Mammary epithelial cell (primary cell): ENCODE measurements at regions of chr1 and their contacts with region 1.

Region 1: DNA sequence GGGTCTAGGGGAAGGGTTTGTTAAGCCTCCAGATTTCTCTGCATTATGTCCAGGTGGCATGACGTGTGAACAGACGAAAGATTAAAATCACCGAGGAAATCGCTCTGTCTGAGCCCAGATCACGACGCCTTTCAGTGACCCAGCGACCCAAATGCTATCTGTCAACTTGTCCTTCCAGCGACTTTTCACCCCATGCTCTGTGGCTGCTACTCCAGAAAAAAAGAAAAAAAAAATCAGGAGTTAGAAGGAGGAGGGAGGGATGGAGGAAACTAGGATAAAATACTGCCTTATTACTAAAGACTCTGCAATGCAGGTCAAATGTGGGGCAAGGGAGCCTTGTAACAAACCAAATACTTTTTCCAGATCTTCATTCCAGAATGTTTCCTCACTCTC is 352.0 kb downstream of the NUF2 start:
- DNase-seq: no peak
- H3K4me3 ChIP-seq: no peak overlapping the region
- H3K27ac ChIP-seq: no peak overlapping the region
- H3K4me1 ChIP-seq: no peaks in the 10 kb centered on the region
- H3K27me3 ChIP-seq: no peaks in the 10 kb centered on the region
- CTCF ChIP-seq: no peak

Region 2: GRCh38 chr1:163331116-163331515 is 342.6 kb before region 1 on chr1:
- CTCF ChIA-PET with region 1: no interaction called
- dilution Hi-C with region 1: no loop called
- in situ Hi-C with region 1: no loop called
- intact Hi-C with region 1: no loop called
- DNase-seq: no peak
- H3K4me3 ChIP-seq: no peak overlapping the region
- H3K27ac ChIP-seq: no peak overlapping the region
- H3K4me1 ChIP-seq: no peaks in the 10 kb centered on the region
- H3K27me3 ChIP-seq: no peaks in the 10 kb centered on the region
- CTCF ChIP-seq: no peak

Region 3: DNA sequence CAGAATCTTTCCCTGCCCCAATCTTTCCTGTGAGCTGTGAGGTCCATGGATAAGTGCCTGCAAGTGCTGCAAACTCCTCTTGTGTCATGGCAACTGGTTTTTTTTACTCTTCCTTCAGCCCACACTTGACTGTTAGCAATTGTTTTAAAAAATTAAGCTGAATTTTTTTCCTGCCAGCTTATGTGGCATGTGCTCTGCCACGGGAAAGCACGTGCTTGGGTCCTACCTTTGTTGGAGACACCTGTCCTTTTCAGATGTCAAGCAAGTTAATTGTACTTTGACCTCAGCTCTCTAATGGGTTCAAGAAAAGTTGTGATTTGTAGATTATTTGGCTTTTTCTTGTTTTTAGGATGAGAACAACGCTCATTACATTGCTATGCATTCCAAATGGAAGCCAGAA is 46.5 kb after region 1 on chr1:
- CTCF ChIA-PET with region 1: no interaction called
- dilution Hi-C with region 1: loop called (anchors 5 kb)
- in situ Hi-C with region 1: no loop called
- intact Hi-C with region 1: no loop called
- DNase-seq: no peak
- H3K4me3 ChIP-seq: no peak overlapping the region
- H3K27ac ChIP-seq: no peak overlapping the region
- H3K4me1 ChIP-seq: no peaks in the 10 kb centered on the region
- H3K27me3 ChIP-seq: no peaks in the 10 kb centered on the region
- CTCF ChIP-seq: no peak

Region 4: GRCh38 chr1:163747261-163747660 is 73.5 kb after region 1 on chr1:
- CTCF ChIA-PET with region 1: no interaction called
- dilution Hi-C with region 1: no loop called
- in situ Hi-C with region 1: no loop called
- intact Hi-C with region 1: no loop called
- DNase-seq: no peak
- H3K4me3 ChIP-seq: no peak overlapping the region
- H3K27ac ChIP-seq: no peak overlapping the region
- H3K4me1 ChIP-seq: no peaks in the 10 kb centered on the region
- H3K27me3 ChIP-seq: no peaks in the 10 kb centered on the region
- CTCF ChIP-seq: no peak

Region 5: DNA sequence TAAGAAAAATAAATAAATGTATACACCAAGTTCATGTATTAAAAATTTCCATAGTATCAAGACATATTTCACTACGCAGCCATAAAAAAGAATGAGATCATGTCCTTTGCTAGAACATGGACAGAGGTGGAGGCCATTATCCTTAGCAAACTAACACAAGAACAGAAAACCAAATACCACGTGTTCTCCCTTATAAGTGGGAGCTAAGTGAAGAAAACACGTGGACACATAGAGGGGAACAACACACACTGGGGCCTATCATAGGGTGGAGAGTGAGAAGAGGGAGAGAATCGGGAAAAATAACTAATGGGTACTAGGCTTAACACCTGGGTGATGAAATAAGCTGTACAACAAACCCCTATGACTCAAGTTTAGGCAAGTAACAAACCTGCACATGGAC is 332.9 kb after region 1 on chr1:
- CTCF ChIA-PET with region 1: no interaction called
- dilution Hi-C with region 1: no loop called
- in situ Hi-C with region 1: no loop called
- intact Hi-C with region 1: no loop called
- DNase-seq: no peak
- H3K4me3 ChIP-seq: no peak overlapping the region
- H3K27ac ChIP-seq: no peak overlapping the region
- H3K4me1 ChIP-seq: no peaks in the 10 kb centered on the region
- H3K27me3 ChIP-seq: no peaks in the 10 kb centered on the region
- CTCF ChIP-seq: no peak

Region 6: DNA sequence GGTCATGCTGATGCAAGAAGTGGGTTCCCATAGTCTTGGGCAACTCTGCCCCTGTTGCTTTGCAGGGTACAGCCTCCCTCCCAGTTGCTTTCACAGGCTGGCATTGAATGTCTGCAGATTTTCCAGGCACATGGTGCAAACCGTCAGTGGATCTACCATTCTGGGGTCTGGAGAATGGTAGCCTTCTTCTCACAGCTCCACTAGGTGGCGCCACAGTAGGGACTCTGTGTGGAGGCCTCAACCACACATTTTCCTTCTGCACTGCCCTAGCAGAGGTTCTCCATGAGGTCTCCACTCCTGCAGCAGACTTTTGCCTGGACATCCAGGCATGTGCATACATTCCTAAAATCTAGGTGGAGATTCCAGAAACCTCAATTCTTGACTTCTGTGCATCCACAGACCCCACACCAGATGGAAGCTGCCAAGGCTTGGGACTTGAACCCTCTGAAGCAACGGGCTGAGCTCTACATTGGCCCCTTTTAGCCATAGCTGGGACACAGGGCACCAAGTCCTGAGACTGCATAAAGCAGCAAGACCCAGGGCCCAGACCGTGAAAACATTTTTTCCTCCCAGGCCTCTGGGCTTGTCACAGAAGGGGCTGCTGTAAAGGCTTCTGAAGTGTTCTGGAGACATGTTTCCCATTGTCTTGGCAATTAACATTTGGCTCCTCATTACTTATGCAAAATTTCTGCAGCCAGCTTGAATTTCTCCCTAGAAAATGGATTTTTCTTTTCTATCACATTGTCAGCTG is 419.0 kb after region 1 on chr1:
- CTCF ChIA-PET with region 1: no interaction called
- dilution Hi-C with region 1: no loop called
- in situ Hi-C with region 1: no loop called
- intact Hi-C with region 1: no loop called
- DNase-seq: no peak
- H3K4me3 ChIP-seq: no peak overlapping the region
- H3K27ac ChIP-seq: no peak overlapping the region
- H3K4me1 ChIP-seq: no peaks in the 10 kb centered on the region
- H3K27me3 ChIP-seq: no peaks in the 10 kb centered on the region
- CTCF ChIP-seq: peak in 1 of 2 donors; percentile 22